Colonic mucosa (tissue), 4 donors: ENCODE measurements at regions of chr4 and their contacts with region 1.

Region 1: GRCh38 chr4:173001571-173001970 is 167.0 kb upstream of the GALNT7 start:
- DNase-seq: no peak
- H3K4me3 ChIP-seq: no peak overlapping the region
- H3K27ac ChIP-seq: no peak overlapping the region
- H3K4me1 ChIP-seq: no peaks in the 10 kb centered on the region
- H3K27me3 ChIP-seq: no peaks in the 10 kb centered on the region
- CTCF ChIP-seq: no peak

Region 2: DNA sequence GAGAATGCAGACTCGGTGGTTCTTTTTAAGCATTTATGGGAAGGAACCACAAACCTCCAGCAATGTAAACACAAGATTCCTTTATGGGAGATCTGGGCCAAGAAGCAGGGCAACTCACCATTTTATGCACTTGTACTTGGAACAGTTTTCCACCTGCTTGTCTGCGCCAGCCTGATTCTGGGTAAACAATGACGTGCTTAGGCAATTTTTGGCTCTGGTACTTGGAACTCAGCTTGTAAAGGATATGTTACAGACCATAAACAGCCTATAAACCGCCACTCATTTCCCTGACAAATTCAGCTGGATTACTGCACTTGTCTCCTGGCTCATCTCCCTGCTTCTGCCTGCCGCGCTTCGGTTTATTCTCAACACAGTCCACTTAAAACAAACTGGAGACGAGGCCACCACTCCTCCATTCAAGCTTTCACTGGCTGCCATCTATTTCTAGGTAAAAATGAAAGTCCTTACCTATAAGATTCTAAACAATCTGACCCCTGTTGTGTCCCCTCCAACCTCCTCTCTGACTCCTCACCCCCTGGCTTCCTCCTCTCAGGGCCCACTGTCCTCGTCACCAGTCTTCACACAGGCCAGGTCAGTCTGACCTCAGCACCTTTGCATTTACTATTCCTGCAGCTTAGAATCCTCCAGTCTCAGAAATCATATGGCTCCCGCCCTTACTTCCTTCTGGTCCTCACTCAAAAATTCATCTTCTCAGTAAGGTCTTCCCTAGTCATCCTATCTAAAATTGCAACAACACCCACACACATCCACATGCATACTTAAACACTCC is 38.8 kb before region 1 on chr4:
- intact Hi-C with region 1: loop called (anchors 5 kb)
- DNase-seq: peak; percentile 83
- H3K4me3 ChIP-seq: no peak overlapping the region
- H3K27ac ChIP-seq: peak overlapping the region; percentile 41
- H3K4me1 ChIP-seq: peaks cover 7% of the 10 kb centered on the region
- H3K27me3 ChIP-seq: no peaks in the 10 kb centered on the region
- CTCF ChIP-seq: no peak

Region 3: GRCh38 chr4:174047363-174047762 is 1045.8 kb after region 1 on chr4:
- intact Hi-C with region 1: no loop called
- DNase-seq: no peak
- H3K4me3 ChIP-seq: no peak overlapping the region
- H3K27ac ChIP-seq: no peak overlapping the region
- H3K4me1 ChIP-seq: no peaks in the 10 kb centered on the region
- H3K27me3 ChIP-seq: no peaks in the 10 kb centered on the region
- CTCF ChIP-seq: no peak